CD4-positive, alpha-beta T cell (primary cell): ENCODE measurements at regions of chr6 and their contacts with region 1.

Region 1: GRCh38 chr6:33317669-33318425 is at the start of gene ZBTB22:
- DNase-seq: peak; percentile 90 to 98 (median 95)
- ATAC-seq: peak; percentile 64
- H3K4me3 ChIP-seq: peak within 1 kb of the TSS; percentile 67
- H3K4me3 Mint-ChIP-seq: peak within 1 kb of the TSS; percentile 100
- H3K27ac ChIP-seq: peak within 1 kb of the TSS; percentile 81 to 86
- H3K27ac Mint-ChIP-seq: peak within 1 kb of the TSS; percentile 94
- H3K4me1 ChIP-seq: peaks cover 75% of the 10 kb centered on the region
- H3K4me1 Mint-ChIP-seq: peaks cover 95% of the 10 kb centered on the region
- H3K27me3 ChIP-seq: no peaks in the 10 kb centered on the region
- H3K27me3 Mint-ChIP-seq: no peaks in the 10 kb centered on the region
- CTCF ChIP-seq: no peak
- total RNA-seq, gene ZBTB22: 11.6 to 13.6 TPM

Region 2: GRCh38 chr6:33276864-33277662 is 40.8 kb before region 1 on chr6 and contains the start of gene B3GALT4:
- CTCF ChIA-PET with region 1: interaction called, 4 read pairs
- POLR2A ChIA-PET with region 1: interaction called, 37 read pairs
- intact Hi-C with region 1: loop called (anchors 5 kb)
- DNase-seq: peak in 13 of 14 experiments; percentile 45 to 89 (median 64)
- ATAC-seq: peak; percentile 68
- H3K4me3 ChIP-seq: peak within 1 kb of the TSS; percentile 96
- H3K4me3 Mint-ChIP-seq: peak within 1 kb of the TSS; percentile 93
- H3K27ac ChIP-seq: peak within 1 kb of the TSS; percentile 82 to 90
- H3K27ac Mint-ChIP-seq: peak within 1 kb of the TSS; percentile 97
- H3K4me1 ChIP-seq: peaks cover 83% of the 10 kb centered on the region
- H3K4me1 Mint-ChIP-seq: peaks cover 67% of the 10 kb centered on the region
- H3K27me3 ChIP-seq: no peaks in the 10 kb centered on the region
- H3K27me3 Mint-ChIP-seq: no peaks in the 10 kb centered on the region
- CTCF ChIP-seq: peak; percentile 36
- total RNA-seq, gene B3GALT4: 11.1 to 12.7 TPM

Region 3: GRCh38 chr6:33288921-33289748 is 28.7 kb before region 1 on chr6 and contains the starts of genes PFDN6 and WDR46:
- CTCF ChIA-PET with region 1: interaction called, 3 read pairs
- POLR2A ChIA-PET with region 1: interaction called, 26 read pairs
- intact Hi-C with region 1: no loop called
- DNase-seq: peak; percentile 62 to 92 (median 76)
- ATAC-seq: peak; percentile 97
- H3K4me3 ChIP-seq: peak within 1 kb of the TSS; percentile 80
- H3K4me3 Mint-ChIP-seq: peak within 1 kb of the TSS; percentile 97
- H3K27ac ChIP-seq: peak within 1 kb of the TSS; percentile 71 to 83
- H3K27ac Mint-ChIP-seq: peak within 1 kb of the TSS; percentile 83
- H3K4me1 ChIP-seq: peaks cover 39% of the 10 kb centered on the region
- H3K4me1 Mint-ChIP-seq: peaks cover 45% of the 10 kb centered on the region
- H3K27me3 ChIP-seq: no peaks in the 10 kb centered on the region
- H3K27me3 Mint-ChIP-seq: no peaks in the 10 kb centered on the region
- CTCF ChIP-seq: no peak
- total RNA-seq, gene PFDN6: 9.7 to 11.7 TPM
- total RNA-seq, gene WDR46: 13.6 to 15.8 TPM

Region 4: GRCh38 chr6:33299237-33299944 is 18.5 kb before region 1 on chr6:
- CTCF ChIA-PET with region 1: interaction called, 14 read pairs
- POLR2A ChIA-PET with region 1: interaction called, 84 read pairs
- intact Hi-C with region 1: loop called (anchors 1 kb)
- DNase-seq: peak; percentile 89 to 97 (median 92)
- ATAC-seq: peak; percentile 84
- H3K4me3 ChIP-seq: peak overlapping the region; percentile 91
- H3K4me3 Mint-ChIP-seq: peak overlapping the region; percentile 98
- H3K27ac ChIP-seq: peak overlapping the region; percentile 90 to 96
- H3K27ac Mint-ChIP-seq: peak overlapping the region; percentile 99
- H3K4me1 ChIP-seq: peaks cover 34% of the 10 kb centered on the region
- H3K4me1 Mint-ChIP-seq: peaks cover 32% of the 10 kb centered on the region
- H3K27me3 ChIP-seq: no peaks in the 10 kb centered on the region
- H3K27me3 Mint-ChIP-seq: no peaks in the 10 kb centered on the region
- CTCF ChIP-seq: peak; percentile 74

Region 5: DNA sequence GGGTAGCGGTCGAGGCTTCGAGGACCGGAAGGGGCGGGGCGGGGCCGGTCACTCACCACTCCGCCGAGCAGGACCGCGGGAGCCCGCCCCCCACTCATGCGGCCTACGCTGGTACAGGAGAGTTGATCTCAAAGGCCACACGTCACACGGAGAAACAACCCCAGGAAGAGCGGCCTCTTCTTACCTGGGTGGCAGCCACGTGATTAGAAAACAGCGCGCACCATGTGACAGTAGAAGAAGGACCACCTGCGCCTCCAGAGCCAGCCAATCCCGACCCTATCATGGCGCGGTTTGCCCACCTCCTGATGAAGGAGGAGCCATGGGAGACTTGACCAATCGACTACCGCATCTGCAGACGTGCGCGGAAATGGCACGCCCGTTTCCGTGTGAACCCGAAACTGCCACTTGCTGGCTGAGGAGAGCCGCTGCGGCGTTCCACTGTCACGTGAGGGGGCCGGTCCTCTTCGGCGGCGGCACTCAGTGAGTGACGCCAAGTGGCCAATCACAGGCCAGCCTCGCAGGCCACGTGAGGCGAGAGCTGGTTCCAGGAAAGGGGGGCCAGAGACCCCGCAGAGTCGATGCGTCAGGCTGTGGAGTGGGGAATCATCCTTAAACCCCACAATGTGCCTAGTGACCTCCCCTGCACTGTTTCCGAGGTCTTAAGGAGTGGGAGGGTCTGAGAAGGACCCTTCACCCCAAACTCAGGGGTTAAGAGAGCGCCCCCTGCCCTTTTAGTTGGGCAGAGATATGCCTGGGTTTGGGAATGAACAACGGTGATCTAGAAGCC is 100.2 kb after region 1 on chr6 and contains the start of gene CUTA:
- CTCF ChIA-PET with region 1: no interaction called
- POLR2A ChIA-PET with region 1: interaction called, 12 read pairs
- intact Hi-C with region 1: loop called in 1 of 2 experiments (anchors 5 kb)
- DNase-seq: peak; percentile 97 to 100 (median 98)
- ATAC-seq: peak; percentile 85
- H3K4me3 ChIP-seq: peak within 1 kb of the TSS; percentile 82
- H3K4me3 Mint-ChIP-seq: peak within 1 kb of the TSS; percentile 92
- H3K27ac ChIP-seq: peak within 1 kb of the TSS; percentile 97 to 99
- H3K27ac Mint-ChIP-seq: peak within 1 kb of the TSS; percentile 98
- H3K4me1 ChIP-seq: peaks cover 77% of the 10 kb centered on the region
- H3K4me1 Mint-ChIP-seq: peaks cover 79% of the 10 kb centered on the region
- H3K27me3 ChIP-seq: no peaks in the 10 kb centered on the region
- H3K27me3 Mint-ChIP-seq: no peaks in the 10 kb centered on the region
- CTCF ChIP-seq: peak; percentile 30
- total RNA-seq, gene CUTA: 176 to 185 TPM

Region 6: DNA sequence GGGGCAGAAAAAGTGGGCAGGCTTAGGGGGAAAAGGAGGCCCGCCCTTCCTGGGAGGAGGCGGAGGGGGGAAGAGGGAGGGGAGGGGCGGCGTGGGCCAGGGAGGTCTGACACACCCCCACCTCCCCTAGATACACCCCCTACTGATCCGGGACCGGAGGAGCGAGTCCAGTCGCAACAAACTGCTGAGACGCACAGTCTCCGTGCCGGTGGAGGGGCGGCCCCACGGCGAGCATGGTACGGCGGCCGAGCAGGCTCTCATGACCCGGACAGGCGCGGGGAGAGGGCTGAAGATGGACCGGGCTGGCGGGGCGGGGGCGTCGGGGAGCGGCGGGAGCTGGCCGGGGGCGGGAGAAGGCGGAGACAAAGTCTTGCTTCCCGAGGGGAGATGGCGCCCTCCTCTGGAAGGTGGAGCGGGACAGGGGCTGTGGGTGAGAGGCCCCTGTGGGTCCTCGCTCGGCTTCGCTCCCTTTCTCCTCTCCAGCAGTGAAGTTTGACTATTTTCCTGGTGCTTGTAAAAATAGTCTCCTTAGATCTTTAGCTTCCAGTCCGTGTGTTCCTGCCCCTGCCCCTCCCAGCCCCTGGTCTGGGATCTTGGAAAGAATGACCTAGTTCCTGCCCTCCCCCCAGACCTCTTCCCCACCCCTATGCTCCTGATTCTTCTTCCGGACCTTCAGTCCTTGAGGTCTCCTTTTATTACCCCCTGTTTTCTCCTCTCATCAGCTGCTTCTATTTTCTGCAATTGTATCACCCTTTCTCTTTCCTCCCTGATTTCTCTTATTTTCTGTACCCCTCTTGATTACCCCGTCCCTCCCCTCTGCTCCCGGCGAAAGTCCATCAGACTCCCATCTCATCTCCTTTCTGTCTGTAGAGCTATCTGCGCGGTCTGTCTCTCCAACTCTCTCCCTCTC is 108.1 kb after region 1 on chr6:
- CTCF ChIA-PET with region 1: interaction called, 5 read pairs
- POLR2A ChIA-PET with region 1: interaction called, 9 read pairs
- intact Hi-C with region 1: loop called in 1 of 2 experiments (anchors 1 kb)
- DNase-seq: peak; percentile 65 to 91 (median 80)
- ATAC-seq: peak; percentile 48
- H3K4me3 ChIP-seq: peak overlapping the region; percentile 71
- H3K4me3 Mint-ChIP-seq: peak overlapping the region; percentile 94
- H3K27ac ChIP-seq: peak overlapping the region; percentile 86 to 92
- H3K27ac Mint-ChIP-seq: peak overlapping the region; percentile 99
- H3K4me1 ChIP-seq: peaks cover 60% of the 10 kb centered on the region
- H3K4me1 Mint-ChIP-seq: peaks cover 80% of the 10 kb centered on the region
- H3K27me3 ChIP-seq: no peaks in the 10 kb centered on the region
- H3K27me3 Mint-ChIP-seq: no peaks in the 10 kb centered on the region
- CTCF ChIP-seq: peak; percentile 65